IMR-90 (cell line): ENCODE measurements at regions of chr15 and their contacts with region 1.

Region 1: GRCh38 chr15:72464251-72464650 is 9.9 kb upstream of the ARIH1 start:
- DNase-seq: no peak
- ATAC-seq: no peak
- H3K4me3 ChIP-seq: no peak overlapping the region
- H3K27ac ChIP-seq: no peak overlapping the region
- H3K4me1 ChIP-seq: no peaks in the 10 kb centered on the region
- H3K27me3 ChIP-seq: no peaks in the 10 kb centered on the region
- CTCF ChIP-seq: no peak
- POLR2A ChIP-seq: no peak
- RAD21 ChIP-seq: no peak

Region 2: GRCh38 chr15:72237286-72238224 is 226.7 kb before region 1 on chr15:
- CTCF ChIA-PET with region 1: no interaction called
- POLR2A ChIA-PET with region 1: no interaction called
- dilution Hi-C with region 1: no loop called
- in situ Hi-C with region 1: no loop called
- intact Hi-C with region 1: no loop called
- DNase-seq: peak; percentile 98
- ATAC-seq: peak; percentile 95
- H3K4me3 ChIP-seq: peak overlapping the region; percentile 39; the same call in 1 of the 2 replicates
- H3K27ac ChIP-seq: peak overlapping the region; percentile 94
- H3K4me1 ChIP-seq: peaks cover 14% of the 10 kb centered on the region
- H3K27me3 ChIP-seq: no peaks in the 10 kb centered on the region
- CTCF ChIP-seq: no peak
- POLR2A ChIP-seq: peak; percentile 88
- RAD21 ChIP-seq: no peak

Region 3: DNA sequence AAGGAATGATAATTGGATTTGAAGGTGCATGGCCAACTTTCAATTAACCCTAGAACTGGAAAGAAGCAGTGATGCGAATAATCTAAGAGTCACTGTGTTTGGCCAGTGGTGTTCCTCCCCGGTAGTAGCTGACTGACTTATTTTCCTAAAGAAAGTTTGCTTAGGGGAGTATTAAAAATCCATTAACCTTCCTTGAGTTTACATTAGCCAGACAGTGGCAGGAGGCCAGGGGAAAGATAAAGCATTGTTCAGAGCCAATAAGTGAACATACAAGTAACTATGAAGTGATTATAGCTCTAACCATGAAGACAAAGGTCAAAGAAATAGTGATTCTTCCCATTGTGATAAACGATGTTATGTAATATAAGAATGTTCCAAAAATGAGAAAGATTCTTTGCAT is 75.0 kb before region 1 on chr15:
- CTCF ChIA-PET with region 1: no interaction called
- POLR2A ChIA-PET with region 1: no interaction called
- dilution Hi-C with region 1: no loop called
- in situ Hi-C with region 1: no loop called
- intact Hi-C with region 1: loop called (anchors 5 kb)
- DNase-seq: peak; percentile 4
- ATAC-seq: no peak
- H3K4me3 ChIP-seq: no peak overlapping the region
- H3K27ac ChIP-seq: no peak overlapping the region
- H3K4me1 ChIP-seq: no peaks in the 10 kb centered on the region
- H3K27me3 ChIP-seq: peaks cover 20% of the 10 kb centered on the region
- CTCF ChIP-seq: no peak
- POLR2A ChIP-seq: no peak
- RAD21 ChIP-seq: no peak

Region 4: DNA sequence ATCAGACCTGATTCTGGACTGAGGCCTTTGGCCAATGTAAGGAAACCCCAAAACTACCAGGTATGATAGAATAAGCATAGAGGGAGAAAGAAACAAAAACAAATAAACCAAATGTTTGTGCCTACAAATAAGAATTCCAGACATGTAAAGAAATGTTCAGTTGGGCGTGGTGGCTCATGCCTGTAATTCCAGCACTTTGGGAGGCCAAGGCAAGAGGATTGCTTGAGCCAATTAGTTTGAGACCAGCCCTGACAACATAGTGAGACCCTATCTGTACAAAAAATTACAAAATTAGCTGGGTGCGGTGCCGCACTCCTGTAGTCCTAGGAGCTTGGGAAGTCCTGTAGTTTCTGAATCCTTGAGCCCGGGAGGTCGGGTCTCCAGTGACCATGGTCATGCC is 53.1 kb before region 1 on chr15:
- CTCF ChIA-PET with region 1: no interaction called
- POLR2A ChIA-PET with region 1: no interaction called
- dilution Hi-C with region 1: no loop called
- in situ Hi-C with region 1: no loop called
- intact Hi-C with region 1: no loop called
- DNase-seq: no peak
- ATAC-seq: no peak
- H3K4me3 ChIP-seq: no peak overlapping the region
- H3K27ac ChIP-seq: no peak overlapping the region
- H3K4me1 ChIP-seq: no peaks in the 10 kb centered on the region
- H3K27me3 ChIP-seq: peaks cover 19% of the 10 kb centered on the region
- CTCF ChIP-seq: no peak
- POLR2A ChIP-seq: no peak
- RAD21 ChIP-seq: no peak